Esophagus squamous epithelium (tissue), 5 donors: ENCODE measurements at regions of chr1 and their contacts with region 1.

Region 1: GRCh38 chr1:94801919-94802546 is 18.1 kb upstream of the SLC44A3 start:
- DNase-seq: no peak
- H3K4me3 ChIP-seq: peak overlapping the region in 2 of 4 donors; percentile 12 to 26
- H3K27ac ChIP-seq: peak overlapping the region; percentile 27 to 85 (median 76)
- H3K4me1 ChIP-seq: peaks cover 0 to 40% (median 10%) of the 10 kb centered on the region in 3 donors
- H3K27me3 ChIP-seq: no peaks in the 10 kb centered on the region
- CTCF ChIP-seq: peak; percentile 21 to 61 (median 36)
- POLR2A ChIP-seq: no peak

Region 2: GRCh38 chr1:94522304-94522703 is 279.7 kb before region 1 on chr1:
- intact Hi-C with region 1: loop called (anchors 5 kb)
- DNase-seq: no peak
- H3K4me3 ChIP-seq: no peak overlapping the region
- H3K27ac ChIP-seq: no peak overlapping the region
- H3K4me1 ChIP-seq: peaks cover 0 to under 1% (median 0%) of the 10 kb centered on the region in 3 donors
- H3K27me3 ChIP-seq: no peaks in the 10 kb centered on the region
- CTCF ChIP-seq: peak in 3 of 6 experiments; percentile 25 to 53 (median 33)
- POLR2A ChIP-seq: no peak